ENCODE measurements at regions of chr10 and their contacts with region 1.

Region 1: GRCh38 chr10:59265141-59265540 is 88.7 kb downstream of the PHYHIPL start:
- DNase-seq: no peak
- H3K4me3 ChIP-seq: no peak overlapping the region
- H3K27ac ChIP-seq: no peak overlapping the region
- H3K4me1 ChIP-seq: no peaks in the 10 kb centered on the region
- H3K27me3 ChIP-seq: no peaks in the 10 kb centered on the region
- CTCF ChIP-seq: no peak
- POLR2A ChIP-seq: no peak

Region 2: GRCh38 chr10:59456199-59456598 is 191.1 kb after region 1 on chr10:
- intact Hi-C with region 1: loop called in 1 of 2 experiments (anchors 10 kb)
- DNase-seq: no peak
- H3K4me3 ChIP-seq: no peak overlapping the region
- H3K27ac ChIP-seq: no peak overlapping the region
- H3K4me1 ChIP-seq: no peaks in the 10 kb centered on the region
- H3K27me3 ChIP-seq: no peaks in the 10 kb centered on the region
- CTCF ChIP-seq: no peak
- POLR2A ChIP-seq: no peak

Region 3: DNA sequence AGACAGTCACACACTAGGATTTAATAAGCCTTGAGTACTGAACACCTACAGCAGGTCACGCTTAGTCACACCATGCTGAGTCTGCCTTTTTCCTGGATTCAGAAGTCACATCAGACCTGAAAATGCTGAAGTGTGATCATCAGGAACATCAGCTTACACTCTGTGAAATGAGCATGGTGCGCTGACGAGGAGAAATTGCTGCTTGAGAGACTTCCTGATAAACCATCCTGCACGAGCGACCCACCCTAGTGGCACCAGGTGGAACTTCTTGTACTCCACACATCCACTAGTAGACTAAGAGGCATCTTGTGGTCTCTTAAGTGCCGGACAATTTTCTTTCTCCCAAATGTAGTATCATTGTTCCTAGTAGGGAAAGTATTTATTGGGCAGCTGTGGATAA is 539.9 kb after region 1 on chr10:
- intact Hi-C with region 1: no loop called
- DNase-seq: peak; percentile 35 to 87 (median 64)
- H3K4me3 ChIP-seq: no peak overlapping the region
- H3K27ac ChIP-seq: no peak overlapping the region
- H3K4me1 ChIP-seq: peaks cover 16 to 43% of the 10 kb centered on the region in 2 donors
- H3K27me3 ChIP-seq: no peaks in the 10 kb centered on the region
- CTCF ChIP-seq: peak; percentile 35 to 54 (median 50)
- POLR2A ChIP-seq: no peak